Left cardiac atrium (tissue), 4 donors: ENCODE measurements at regions of chr17 and their contacts with region 1.

Region 1: DNA sequence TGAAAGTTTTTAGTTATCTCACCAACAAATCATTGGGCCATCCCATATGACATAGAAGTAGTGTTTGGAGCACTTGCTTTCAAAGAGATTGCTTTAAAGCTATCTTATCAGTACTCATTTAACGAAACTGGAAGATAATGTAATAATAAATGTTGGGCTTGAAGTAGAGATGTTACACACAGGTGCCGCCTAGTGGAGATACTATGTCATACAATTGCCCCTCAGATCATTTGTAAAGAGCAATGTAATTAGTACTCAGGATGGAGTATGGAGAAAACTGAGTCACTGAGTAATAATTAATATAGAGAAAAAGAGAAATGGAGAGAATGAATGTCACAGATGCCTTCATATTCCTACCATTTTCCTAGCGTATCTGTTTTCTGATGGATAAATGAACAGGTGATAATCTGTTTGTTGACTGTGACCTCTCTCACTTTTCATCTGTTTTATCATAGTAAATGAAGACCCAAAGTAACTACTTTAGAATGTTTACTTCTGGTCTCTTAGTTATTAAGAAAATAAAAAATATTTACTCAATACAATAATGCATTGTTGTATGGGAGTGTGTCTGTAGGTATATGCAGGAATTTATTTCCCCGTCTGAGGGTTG is 80.4 kb downstream of the EFCAB5 start:
- DNase-seq: peak; percentile 20
- ATAC-seq: no peak

Region 2: GRCh38 chr17:29918922-29919856 is 102.6 kb before region 1 on chr17:
- intact Hi-C with region 1: no loop called
- DNase-seq: no peak
- ATAC-seq: peak in 1 of 2 donors; percentile 67

Region 3: DNA sequence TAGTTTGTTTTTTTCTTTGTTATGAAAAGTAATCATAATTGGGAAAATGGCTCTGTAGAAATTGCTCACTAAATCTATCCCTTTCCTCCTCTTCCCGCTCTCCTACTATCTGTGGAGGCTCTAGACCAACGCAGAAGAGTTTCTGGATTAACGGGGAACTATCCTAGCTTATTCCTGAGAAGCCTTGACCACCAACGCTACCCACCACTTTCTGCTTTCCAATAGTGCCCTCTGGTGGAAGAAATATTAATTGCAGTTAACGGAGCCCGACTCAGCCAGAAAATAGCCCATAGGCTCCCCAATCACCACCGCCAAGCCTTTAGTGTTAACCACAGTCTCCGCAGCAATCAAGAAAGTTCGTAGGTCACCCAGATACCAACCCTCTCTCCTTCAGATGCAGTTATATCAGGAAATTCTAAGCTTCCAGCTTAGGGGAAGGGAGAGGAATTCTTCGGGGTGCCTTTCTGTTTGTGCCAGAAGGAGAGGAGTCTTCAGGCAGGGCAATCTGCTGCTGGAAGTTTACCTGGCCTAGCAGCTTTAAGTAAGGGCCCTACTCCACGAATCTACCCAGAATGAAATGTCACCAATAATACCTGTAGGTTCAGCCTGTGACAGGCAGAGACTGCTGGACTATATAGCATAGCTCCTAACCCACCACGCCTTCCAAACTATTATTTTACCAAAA is 71.8 kb after region 1 on chr17:
- intact Hi-C with region 1: loop called in 1 of 2 experiments (anchors 10 kb)
- DNase-seq: no peak
- ATAC-seq: peak; percentile 72 to 74